PC-9 (cell line): ENCODE measurements at regions of chr12 and their contacts with region 1.

Region 1: GRCh38 chr12:96399919-96400797 is at the start of gene CDK17:
- DNase-seq: peak; percentile 70 to 81
- H3K4me3 ChIP-seq: peak within 1 kb of the TSS; percentile 67
- H3K27ac ChIP-seq: peak within 1 kb of the TSS; percentile 93
- H3K4me1 ChIP-seq: peaks cover 51% of the 10 kb centered on the region
- H3K27me3 ChIP-seq: no peaks in the 10 kb centered on the region
- CTCF ChIP-seq: no peak
- total RNA-seq, gene CDK17: 22.5 and 29.0 TPM in 2 replicates

Region 2: DNA sequence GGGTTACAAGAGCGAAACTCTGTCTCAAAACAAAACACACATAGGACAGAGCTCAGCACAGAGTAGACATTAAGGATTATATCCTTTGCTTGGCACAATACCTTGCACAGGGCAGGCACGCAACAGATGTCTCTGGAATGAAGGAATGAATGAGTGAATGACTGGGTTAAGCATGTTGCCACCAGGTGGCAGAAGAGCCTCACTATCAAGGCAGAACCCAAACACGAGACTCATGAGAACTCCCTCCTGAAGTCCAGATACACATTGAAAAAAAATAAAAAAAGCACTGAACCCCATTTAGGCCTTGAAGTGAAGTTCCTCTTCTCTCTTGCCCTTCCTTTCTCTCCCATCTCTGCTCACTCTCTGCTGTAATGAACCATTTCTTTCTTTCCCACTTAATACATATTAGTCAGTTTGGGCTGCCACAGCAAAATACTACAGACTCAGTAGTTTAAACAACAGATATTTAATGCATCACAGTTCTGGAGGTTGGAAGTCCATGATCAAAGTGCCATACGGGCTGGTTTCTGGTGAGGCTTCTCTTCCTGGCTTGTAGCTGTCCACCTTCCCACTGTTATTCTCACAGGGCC is 338.2 kb before region 1 on chr12:
- CTCF ChIA-PET with region 1: interaction called, 4 read pairs
- POLR2A ChIA-PET with region 1: no interaction called
- intact Hi-C with region 1: loop called (anchors 2 kb)
- DNase-seq: peak; percentile 69 to 72
- H3K4me3 ChIP-seq: no peak overlapping the region
- H3K27ac ChIP-seq: 0 out of 2 replicates have a peak overlapping the region, but pooled peaks have one; percentile 14
- H3K4me1 ChIP-seq: peaks cover 9% of the 10 kb centered on the region; the same call in 1 of the 2 replicates
- H3K27me3 ChIP-seq: no peaks in the 10 kb centered on the region
- CTCF ChIP-seq: peak; percentile 89

Region 3: GRCh38 chr12:96350982-96351381 is 49.2 kb before region 1 on chr12:
- CTCF ChIA-PET with region 1: no interaction called
- POLR2A ChIA-PET with region 1: no interaction called
- intact Hi-C with region 1: loop called (anchors 5 kb)
- DNase-seq: no peak
- H3K4me3 ChIP-seq: no peak overlapping the region
- H3K27ac ChIP-seq: no peak overlapping the region
- H3K4me1 ChIP-seq: no peaks in the 10 kb centered on the region
- H3K27me3 ChIP-seq: no peaks in the 10 kb centered on the region
- CTCF ChIP-seq: no peak

Region 4: GRCh38 chr12:96361074-96361473 is 39.1 kb before region 1 on chr12:
- CTCF ChIA-PET with region 1: no interaction called
- POLR2A ChIA-PET with region 1: no interaction called
- intact Hi-C with region 1: no loop called
- DNase-seq: no peak
- H3K4me3 ChIP-seq: no peak overlapping the region
- H3K27ac ChIP-seq: no peak overlapping the region
- H3K4me1 ChIP-seq: peaks cover 22% of the 10 kb centered on the region; the same call in 1 of the 2 replicates
- H3K27me3 ChIP-seq: no peaks in the 10 kb centered on the region
- CTCF ChIP-seq: no peak

Region 5: GRCh38 chr12:96465896-96466295 is 65.7 kb after region 1 on chr12:
- CTCF ChIA-PET with region 1: interaction called, 11 read pairs
- POLR2A ChIA-PET with region 1: no interaction called
- intact Hi-C with region 1: no loop called
- DNase-seq: no peak
- H3K4me3 ChIP-seq: no peak overlapping the region
- H3K27ac ChIP-seq: peak overlapping the region; percentile 75; the same call in 1 of the 2 replicates
- H3K4me1 ChIP-seq: peaks cover 32% of the 10 kb centered on the region
- H3K27me3 ChIP-seq: no peaks in the 10 kb centered on the region
- CTCF ChIP-seq: no peak

Region 6: DNA sequence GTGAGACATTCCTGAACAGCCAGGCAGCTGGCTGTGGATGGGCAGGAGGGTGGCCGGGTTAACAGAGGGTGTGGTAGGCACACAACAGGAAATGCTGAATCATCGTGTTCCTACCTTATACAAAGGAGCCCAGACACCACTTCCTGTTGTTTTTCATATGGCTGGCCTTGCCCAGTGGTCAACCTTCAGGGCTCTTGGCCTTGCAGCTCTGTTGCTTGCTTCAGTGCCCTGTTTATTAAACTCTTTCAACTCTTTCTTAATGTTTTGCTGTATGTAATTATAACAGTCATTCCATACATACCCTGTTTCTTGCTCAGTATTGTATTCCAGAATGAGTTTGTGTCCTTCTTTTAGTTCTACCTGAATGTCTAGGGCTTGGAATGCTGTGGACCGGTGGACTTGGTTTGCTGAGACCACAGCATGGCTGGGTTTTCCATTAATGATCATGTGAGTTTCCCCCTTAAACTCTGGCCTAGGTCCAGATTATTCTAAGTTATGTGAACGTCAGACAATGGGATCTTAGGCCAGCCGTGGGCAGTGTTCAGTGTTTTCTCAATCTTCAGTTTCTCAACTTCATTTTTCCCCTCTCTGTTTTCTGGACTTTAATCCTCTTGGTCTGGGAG is 101.1 kb after region 1 on chr12:
- CTCF ChIA-PET with region 1: interaction called, 3 read pairs
- POLR2A ChIA-PET with region 1: interaction called, 4 read pairs
- intact Hi-C with region 1: loop called (anchors 1 kb)
- DNase-seq: peak; percentile 72 to 85
- H3K4me3 ChIP-seq: peak overlapping the region; percentile 34; the same call in 1 of the 2 replicates
- H3K27ac ChIP-seq: peak overlapping the region; percentile 98
- H3K4me1 ChIP-seq: peaks cover 32% of the 10 kb centered on the region
- H3K27me3 ChIP-seq: no peaks in the 10 kb centered on the region
- CTCF ChIP-seq: no peak

Region 7: DNA sequence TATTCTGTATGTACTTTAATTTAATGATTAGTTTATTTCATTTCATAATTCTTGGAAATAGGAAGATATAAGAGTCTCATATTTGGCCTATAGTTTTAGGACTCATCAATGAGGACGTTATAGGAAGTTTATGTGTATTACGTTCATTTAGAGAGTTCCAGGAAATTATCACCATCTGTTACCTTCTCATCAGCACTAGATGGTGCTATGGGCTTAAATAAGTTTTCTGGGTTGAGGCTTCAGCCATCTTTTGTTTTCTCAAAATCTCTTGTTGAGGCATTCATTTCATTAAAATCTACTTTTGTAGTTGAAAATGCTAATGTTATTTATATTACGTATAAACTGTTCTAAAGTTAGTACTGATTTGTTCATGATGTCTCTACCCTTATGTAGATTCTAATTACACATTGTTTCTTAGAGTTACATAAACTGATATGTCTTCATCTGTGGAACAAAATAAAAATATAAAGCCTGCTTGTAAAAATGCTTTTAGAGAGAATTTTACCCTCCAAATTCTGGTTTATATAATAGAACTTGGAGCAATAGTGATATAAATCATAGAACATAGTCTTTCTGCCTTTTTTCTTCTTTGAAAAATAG is 178.5 kb after region 1 on chr12:
- CTCF ChIA-PET with region 1: no interaction called
- POLR2A ChIA-PET with region 1: no interaction called
- intact Hi-C with region 1: no loop called
- DNase-seq: no peak
- H3K4me3 ChIP-seq: no peak overlapping the region
- H3K27ac ChIP-seq: no peak overlapping the region
- H3K4me1 ChIP-seq: no peaks in the 10 kb centered on the region
- H3K27me3 ChIP-seq: no peaks in the 10 kb centered on the region
- CTCF ChIP-seq: peak; percentile 73